ENCODE measurements at regions of chr5 and their contacts with region 1.

Region 1: GRCh38 chr5:154771383-154771901 is 16.3 kb downstream of the LARP1 start:
- DNase-seq: peak; percentile 79
- H3K4me3 ChIP-seq: no peak overlapping the region; a peak in 1 of 4 replicates
- H3K27ac ChIP-seq: peak overlapping the region; percentile 60 to 75; a peak in 3 of 4 replicates
- H3K4me1 ChIP-seq: peaks cover 21 to 54% of the 10 kb centered on the region in 2 experiments; a peak in 3 of 4 replicates
- H3K27me3 ChIP-seq: no peaks in the 10 kb centered on the region
- CTCF ChIP-seq: peak; percentile 39
- EP300 ChIP-seq: no peak; a peak in 1 of 4 replicates
- RAD21 ChIP-seq: peak; percentile 47

Region 2: DNA sequence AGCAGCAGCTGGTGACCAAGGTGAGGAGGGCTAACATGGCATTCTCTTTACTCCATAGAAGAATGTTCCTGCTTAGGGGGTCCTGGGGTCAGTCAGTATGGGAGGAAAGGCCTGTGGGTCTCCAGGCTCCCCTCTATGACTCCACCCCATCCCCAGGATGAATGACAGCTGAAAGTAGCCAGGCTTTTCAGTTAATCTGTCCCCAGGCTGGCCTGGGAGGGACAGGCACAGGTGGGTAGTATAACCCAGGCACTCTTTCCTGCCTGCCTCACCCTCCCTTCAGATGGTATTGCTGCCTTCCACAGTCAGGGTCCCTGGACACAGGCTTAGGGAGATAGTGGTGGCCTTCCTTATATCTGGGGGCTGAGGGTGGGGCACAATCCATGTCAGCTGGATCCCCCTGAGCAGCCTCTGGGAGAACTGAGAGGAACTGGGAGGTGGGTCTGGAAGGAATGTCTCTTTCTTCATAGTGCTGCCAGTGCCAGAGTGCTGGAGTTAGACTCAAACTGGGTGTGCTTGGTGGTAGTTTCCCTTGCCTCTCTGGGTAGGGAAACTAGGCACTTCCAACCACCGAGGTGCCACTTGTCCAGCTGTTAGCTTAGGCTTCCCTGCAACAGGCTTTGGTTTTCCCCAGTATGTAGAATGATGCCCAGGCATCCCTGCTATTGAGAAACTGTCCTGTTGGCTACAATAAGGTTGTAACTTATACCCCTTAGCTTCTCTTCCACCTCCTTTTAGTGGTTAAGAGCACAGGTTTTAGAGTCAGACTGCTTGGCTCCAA is 11.6 kb after region 1 on chr5:
- CTCF ChIA-PET with region 1: interaction called, 12 read pairs
- POLR2A ChIA-PET with region 1: interaction called, 7 read pairs
- DNase-seq: no peak
- H3K4me3 ChIP-seq: no peak overlapping the region
- H3K27ac ChIP-seq: no peak overlapping the region; a peak in 1 of 4 replicates
- H3K4me1 ChIP-seq: peaks cover 15 to 26% of the 10 kb centered on the region in 2 experiments; a peak in 3 of 4 replicates
- H3K27me3 ChIP-seq: no peaks in the 10 kb centered on the region
- CTCF ChIP-seq: no peak
- EP300 ChIP-seq: no peak
- RAD21 ChIP-seq: no peak

Region 3: DNA sequence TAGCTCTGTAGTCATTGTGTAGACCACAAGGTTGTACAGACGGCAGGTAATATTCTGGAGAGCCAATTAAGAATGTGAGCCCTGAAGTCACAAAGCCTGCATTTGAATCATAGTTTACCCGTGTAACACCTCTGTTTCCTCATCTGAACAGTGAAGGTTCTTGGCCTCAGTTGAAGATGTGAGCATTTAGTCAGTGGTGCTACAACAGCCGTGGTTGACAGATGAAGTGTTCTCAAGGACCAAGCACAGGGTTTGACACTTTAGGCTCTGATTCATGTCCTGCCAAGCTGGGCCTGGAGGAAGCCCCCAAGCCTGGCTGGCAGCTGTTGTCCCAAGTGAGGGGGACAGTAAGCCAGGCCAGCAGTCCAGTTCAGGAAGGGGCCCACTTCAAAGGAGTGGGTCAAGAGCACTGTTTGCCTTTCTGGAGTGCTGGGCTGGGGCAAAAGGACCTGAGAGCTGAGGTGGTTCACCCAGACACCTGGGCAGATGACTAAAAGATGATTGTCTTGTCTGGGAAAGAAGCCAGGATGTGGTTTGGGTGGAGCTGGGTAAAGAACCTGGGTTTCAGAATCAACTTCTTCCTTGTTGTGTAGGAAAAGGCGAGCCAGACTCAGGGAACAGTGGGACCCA is 58.3 kb after region 1 on chr5:
- CTCF ChIA-PET with region 1: no interaction called
- POLR2A ChIA-PET with region 1: no interaction called
- DNase-seq: no peak
- H3K4me3 ChIP-seq: no peak overlapping the region
- H3K27ac ChIP-seq: no peak overlapping the region
- H3K4me1 ChIP-seq: peaks cover 2 to 4% of the 10 kb centered on the region in 2 experiments; a peak in 3 of 4 replicates
- H3K27me3 ChIP-seq: no peaks in the 10 kb centered on the region
- CTCF ChIP-seq: no peak
- EP300 ChIP-seq: no peak
- RAD21 ChIP-seq: no peak